ENCODE measurements at regions of chr15 and their contacts with region 1.

Region 1: DNA sequence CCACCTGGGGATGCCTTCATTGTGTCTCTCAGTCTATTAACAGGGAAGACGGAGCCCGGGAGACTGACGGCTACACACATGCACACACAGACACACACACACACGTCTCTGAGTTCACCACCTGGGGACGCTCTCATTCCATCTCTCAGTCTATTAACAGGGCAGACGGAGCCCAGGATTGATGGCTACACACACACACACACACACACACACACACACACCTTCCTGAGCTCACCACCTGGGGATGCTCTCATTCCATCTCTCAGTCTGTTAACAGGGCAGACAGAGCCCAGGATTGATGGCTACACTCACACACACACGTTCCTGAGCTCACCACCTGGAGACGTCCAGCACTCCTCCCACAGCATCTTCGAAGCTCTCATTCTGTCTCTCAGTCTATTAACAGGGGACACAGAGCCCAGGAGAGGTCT is 143.9 kb downstream of the OR4M2 start:
- DNase-seq: no peak
- H3K27ac ChIP-seq: no peak overlapping the region
- CTCF ChIP-seq: no peak

Region 2: DNA sequence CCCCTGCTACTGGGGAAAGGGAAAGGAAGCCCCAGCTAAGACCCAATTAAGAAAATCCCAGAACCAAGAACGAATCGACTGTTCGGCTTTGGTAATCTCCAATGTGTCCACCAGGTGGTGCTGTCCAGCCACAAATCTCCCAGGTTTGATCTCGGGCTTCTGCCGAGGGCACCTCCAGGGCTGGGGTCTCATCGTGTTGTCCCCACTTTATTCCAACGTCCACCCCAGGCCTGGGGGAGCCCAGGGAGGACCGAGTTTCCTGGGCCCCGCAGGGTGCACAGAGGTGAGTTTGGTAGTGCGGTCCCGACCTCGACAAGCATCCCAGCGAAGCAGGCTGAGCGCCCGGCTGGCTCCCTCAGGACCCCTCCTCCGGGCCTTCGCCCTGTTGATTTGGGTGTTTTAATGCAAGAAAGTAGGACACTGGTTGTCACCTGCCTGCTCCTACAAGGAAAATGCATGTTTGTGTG is 1867.8 kb before region 1 on chr15:
- CTCF ChIA-PET with region 1: interaction called, 13 read pairs
- POLR2A ChIA-PET with region 1: no interaction called
- DNase-seq: peak; percentile 39
- H3K27ac ChIP-seq: no peak overlapping the region
- CTCF ChIP-seq: peak; percentile 80

Region 3: GRCh38 chr15:22240951-22241350 is 16.7 kb after region 1 on chr15:
- CTCF ChIA-PET with region 1: no interaction called
- POLR2A ChIA-PET with region 1: no interaction called
- DNase-seq: no peak
- H3K27ac ChIP-seq: peak overlapping the region; percentile 42
- CTCF ChIP-seq: no peak